K562 (cell line): ENCODE measurements at regions of chr7 and their contacts with region 1.

Region 1: DNA sequence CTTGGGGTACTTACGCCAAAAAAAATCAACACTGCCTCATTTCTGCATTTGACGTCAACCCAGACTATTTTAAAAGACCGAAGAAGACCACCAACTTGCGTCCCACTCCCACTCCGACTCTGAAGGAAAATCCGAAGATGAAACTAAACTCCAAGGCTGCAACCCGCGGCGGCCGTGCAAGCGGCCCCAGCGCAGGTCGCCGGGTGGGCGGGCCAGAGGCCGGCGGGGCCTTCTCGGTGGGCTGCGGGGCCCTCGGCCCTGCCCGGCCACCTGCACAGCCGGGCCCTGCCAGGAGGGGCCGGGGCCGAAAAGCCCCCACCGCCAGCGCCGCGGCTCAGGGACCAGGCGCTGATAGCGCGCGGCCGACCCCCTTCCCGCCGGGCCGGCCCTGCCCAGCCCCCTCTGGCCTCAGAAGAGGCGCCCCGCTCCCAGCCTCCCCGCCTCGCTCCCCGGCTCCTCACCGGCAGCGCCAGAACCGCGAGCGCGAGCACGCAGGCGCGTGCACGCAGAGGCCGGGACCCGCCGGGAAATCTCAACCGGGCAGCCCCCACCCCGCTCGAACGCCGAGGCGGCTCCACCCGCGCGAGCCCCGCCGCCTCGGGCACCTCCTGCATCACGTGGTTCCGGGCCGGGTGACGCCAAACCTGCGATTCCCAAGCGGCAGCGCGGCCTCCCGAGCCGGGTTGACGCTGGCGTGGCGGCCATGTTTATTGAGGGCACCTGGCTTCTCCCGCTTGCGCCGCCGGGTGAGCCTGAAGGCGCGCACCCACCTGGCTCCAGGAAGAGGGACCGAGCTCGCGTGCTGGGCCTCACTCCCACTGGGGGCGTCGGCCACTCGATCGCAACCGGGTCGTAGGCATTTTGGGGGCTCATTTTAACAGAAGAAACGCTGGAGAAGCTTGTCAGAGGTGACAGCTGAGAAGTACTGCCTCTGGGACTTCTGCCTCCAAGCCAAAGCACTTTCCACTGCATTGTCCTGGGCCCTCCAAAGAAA is at the start of gene C7orf25:
- DNase-seq: peak; percentile 96 to 98 (median 96)
- ATAC-seq: peak; percentile 96
- H3K4me3 ChIP-seq: peak within 1 kb of the TSS; percentile 83
- H3K27ac ChIP-seq: peak within 1 kb of the TSS; percentile 68
- H3K4me1 ChIP-seq: peaks cover 14 to 27% of the 10 kb centered on the region in 2 experiments; a peak in 4 of 5 replicates
- H3K27me3 ChIP-seq: no peaks in the 10 kb centered on the region; a peak in 1 of 5 replicates
- CTCF ChIP-seq: peak in 2 of 3 experiments; percentile 20 to 37; a peak in 3 of 6 replicates
- EP300 ChIP-seq: no peak
- POLR2A ChIP-seq: peak; percentile 69
- RAD21 ChIP-seq: no peak
- polyA plus RNA-seq, gene C7orf25: 1.3 to 1.9 TPM

Region 2: DNA sequence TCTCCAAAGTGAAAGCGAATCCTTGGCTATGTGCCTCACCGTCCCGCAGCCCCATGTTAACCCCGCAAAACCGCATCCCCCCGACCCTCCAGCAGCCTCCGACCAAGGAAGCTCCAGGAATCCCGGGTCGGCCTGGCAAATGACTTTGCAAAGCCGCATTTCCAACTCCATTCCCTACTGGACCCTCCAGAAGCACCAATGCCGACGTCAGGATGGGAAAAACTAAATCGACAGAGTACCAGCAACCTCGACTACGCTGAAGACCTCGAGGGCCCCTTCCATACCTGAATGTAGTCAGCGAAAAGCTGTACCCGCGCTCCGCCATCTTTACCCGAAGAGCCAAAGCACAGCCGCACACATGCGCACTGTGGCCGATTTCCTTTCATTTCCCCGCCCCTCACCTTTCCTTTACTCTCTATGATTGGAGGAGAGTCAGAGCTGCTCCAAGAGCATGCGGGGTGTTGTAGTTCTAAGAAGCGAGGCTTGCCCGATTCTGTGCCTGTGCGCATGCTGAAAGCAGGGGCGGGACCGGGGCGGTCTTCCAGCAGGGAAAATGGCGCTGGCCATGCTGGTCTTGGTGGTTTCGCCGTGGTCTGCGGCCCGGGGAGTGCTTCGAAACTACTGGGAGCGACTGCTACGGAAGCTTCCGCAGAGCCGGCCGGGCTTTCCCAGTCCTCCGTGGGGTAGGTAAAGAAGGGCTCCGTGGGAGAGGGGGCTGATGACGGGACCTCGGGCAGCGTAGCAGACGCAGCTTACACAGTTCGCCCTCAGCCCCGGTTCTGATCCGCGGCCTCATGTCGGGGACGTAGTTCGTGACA is 20.3 kb after region 1 on chr7 and contains the starts of genes MRPL32 and PSMA2:
- CTCF ChIA-PET with region 1: no interaction called
- POLR2A ChIA-PET with region 1: interaction called, 8 read pairs
- in situ Hi-C with region 1: no loop called
- intact Hi-C with region 1: loop called (anchors 2 kb)
- DNase-seq: peak; percentile 94 to 98 (median 96)
- ATAC-seq: peak; percentile 100
- H3K4me3 ChIP-seq: peak within 1 kb of the TSS; percentile 85
- H3K27ac ChIP-seq: peak within 1 kb of the TSS; percentile 89
- H3K4me1 ChIP-seq: peaks cover 0 to 15% of the 10 kb centered on the region in 2 experiments; a peak in 4 of 5 replicates
- H3K27me3 ChIP-seq: no peaks in the 10 kb centered on the region
- CTCF ChIP-seq: no peak
- EP300 ChIP-seq: no peak
- POLR2A ChIP-seq: peak; percentile 93
- RAD21 ChIP-seq: no peak
- polyA plus RNA-seq, gene MRPL32: 341 to 351 TPM
- polyA plus RNA-seq, gene PSMA2: 887 to 1,070 TPM